ENCODE measurements at regions of chr16 and their contacts with region 1.

Region 1: GRCh38 chr16:27189335-27189972 is 13.9 kb upstream of the KDM8 start:
- DNase-seq: no peak
- ATAC-seq: peak; percentile 57 to 58; a peak in 5 of 6 replicates
- H3K4me3 ChIP-seq: no peak overlapping the region
- H3K27ac ChIP-seq: no peak overlapping the region
- H3K4me1 ChIP-seq: no peaks in the 10 kb centered on the region
- CTCF ChIP-seq: no peak
- EP300 ChIP-seq: no peak
- POLR2A ChIP-seq: no peak
- RAD21 ChIP-seq: no peak

Region 2: DNA sequence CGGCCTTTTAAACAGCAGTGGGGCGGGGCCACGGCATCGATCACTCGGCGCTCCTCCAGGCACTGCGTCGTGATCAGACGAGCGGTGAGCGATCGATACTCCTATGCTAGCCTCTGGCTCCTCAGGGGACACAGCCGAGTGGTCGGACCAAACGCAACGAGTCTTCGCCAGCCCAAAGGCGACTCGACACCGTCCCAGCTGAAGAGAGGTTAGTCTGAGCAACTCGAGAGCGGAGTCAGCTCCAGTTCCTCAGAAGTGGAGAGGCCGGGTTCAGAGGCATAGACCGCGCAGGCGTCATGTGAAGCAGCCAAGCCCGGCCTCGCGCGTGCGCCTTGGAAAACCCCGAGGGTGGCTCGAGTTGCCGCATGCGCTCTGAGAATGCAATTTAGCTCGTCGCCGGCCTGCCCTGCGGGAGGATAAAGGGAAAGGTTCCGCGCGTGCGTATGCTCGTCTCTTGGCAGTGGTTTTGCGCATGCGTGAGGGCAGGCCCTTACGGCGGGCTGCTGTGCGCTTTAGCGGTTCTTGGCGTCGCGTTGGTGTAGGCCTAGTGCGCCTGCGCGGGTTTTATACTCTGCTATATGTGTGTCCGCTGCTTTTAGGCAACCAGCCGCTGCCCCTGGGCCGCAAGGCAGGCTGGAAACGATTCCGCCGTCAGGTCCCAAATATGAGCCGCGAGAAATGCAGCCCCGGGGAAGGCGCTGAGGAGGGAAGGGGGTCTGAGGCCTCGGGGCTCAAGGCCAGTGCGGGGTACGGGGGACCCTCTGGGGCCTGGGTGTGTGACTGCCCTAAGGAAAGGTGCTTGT is 14.2 kb after region 1 on chr16 and contains the start of gene KDM8:
- CTCF ChIA-PET with region 1: interaction called, 3 read pairs
- POLR2A ChIA-PET with region 1: interaction called, 14 read pairs
- DNase-seq: peak; percentile 98 to 100
- ATAC-seq: peak; percentile 89 to 97
- H3K4me3 ChIP-seq: peak within 1 kb of the TSS; percentile 59
- H3K27ac ChIP-seq: peak within 1 kb of the TSS; percentile 92 to 95
- H3K4me1 ChIP-seq: peaks cover 10% of the 10 kb centered on the region; the same call in 2 of the 3 replicates
- CTCF ChIP-seq: no peak
- EP300 ChIP-seq: no peak
- POLR2A ChIP-seq: peak; percentile 77
- RAD21 ChIP-seq: no peak
- polyA plus RNA-seq, gene KDM8: 1.6 and 2.0 TPM in 2 replicates

Measured in A549 (cell line).